H1 (cell line): ENCODE measurements at regions of chr7 and their contacts with region 1.

Region 1: GRCh38 chr7:139416405-139416804 is 56.7 kb downstream of the LUC7L2 start:
- DNase-seq: no peak
- H3K4me3 ChIP-seq: no peak overlapping the region
- H3K27ac ChIP-seq: no peak overlapping the region
- H3K4me1 ChIP-seq: no peaks in the 10 kb centered on the region
- H3K27me3 ChIP-seq: no peaks in the 10 kb centered on the region
- CTCF ChIP-seq: no peak
- EP300 ChIP-seq: no peak
- POLR2A ChIP-seq: no peak
- RAD21 ChIP-seq: no peak

Region 2: DNA sequence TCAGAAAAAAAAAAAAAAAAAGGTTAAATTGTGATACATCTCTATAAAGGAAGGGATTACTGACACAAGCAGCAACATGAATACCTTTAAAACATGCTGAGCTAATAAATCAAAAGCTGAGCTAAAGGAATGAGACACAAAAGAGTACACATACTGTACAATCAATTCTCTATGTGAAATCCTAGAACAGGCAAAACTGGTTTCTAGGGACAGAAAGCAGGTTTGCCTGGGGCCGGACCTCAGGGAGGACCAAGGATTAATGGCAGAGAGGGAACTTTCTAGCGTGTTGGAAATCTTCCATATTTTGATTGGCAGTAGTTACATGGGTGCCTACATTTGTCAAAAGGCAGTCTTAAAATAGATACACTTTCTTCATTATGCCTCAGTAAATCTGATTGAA is 14.6 kb after region 1 on chr7:
- CTCF ChIA-PET with region 1: interaction called, 16 read pairs
- POLR2A ChIA-PET with region 1: interaction called, 4 read pairs
- DNase-seq: no peak
- H3K4me3 ChIP-seq: no peak overlapping the region
- H3K27ac ChIP-seq: no peak overlapping the region
- H3K4me1 ChIP-seq: no peaks in the 10 kb centered on the region; a peak in 1 of 7 replicates
- H3K27me3 ChIP-seq: no peaks in the 10 kb centered on the region
- CTCF ChIP-seq: no peak
- EP300 ChIP-seq: no peak
- POLR2A ChIP-seq: no peak
- RAD21 ChIP-seq: no peak